Ascending aorta (tissue), 2 donors: ENCODE measurements at regions of chr15 and their contacts with region 1.

Region 1: GRCh38 chr15:71278989-71279756 is 163.9 kb downstream of the THSD4 start:
- DNase-seq: peak; percentile 31 to 90
- H3K4me3 ChIP-seq: peak overlapping the region in 1 of 2 donors; percentile 18
- H3K27ac ChIP-seq: peak overlapping the region; percentile 80 to 93
- H3K4me1 ChIP-seq: peaks cover 0 to 49% of the 10 kb centered on the region in 2 donors
- H3K27me3 ChIP-seq: no peaks in the 10 kb centered on the region
- CTCF ChIP-seq: no peak

Region 2: GRCh38 chr15:71079208-71080021 is 199.8 kb before region 1 on chr15:
- intact Hi-C with region 1: loop called (anchors 5 kb)
- DNase-seq: peak in 1 of 2 donors; percentile 90
- H3K4me3 ChIP-seq: no peak overlapping the region
- H3K27ac ChIP-seq: peak overlapping the region; percentile 93 to 95
- H3K4me1 ChIP-seq: peaks cover 5 to 44% of the 10 kb centered on the region in 2 donors
- H3K27me3 ChIP-seq: no peaks in the 10 kb centered on the region
- CTCF ChIP-seq: no peak

Region 3: DNA sequence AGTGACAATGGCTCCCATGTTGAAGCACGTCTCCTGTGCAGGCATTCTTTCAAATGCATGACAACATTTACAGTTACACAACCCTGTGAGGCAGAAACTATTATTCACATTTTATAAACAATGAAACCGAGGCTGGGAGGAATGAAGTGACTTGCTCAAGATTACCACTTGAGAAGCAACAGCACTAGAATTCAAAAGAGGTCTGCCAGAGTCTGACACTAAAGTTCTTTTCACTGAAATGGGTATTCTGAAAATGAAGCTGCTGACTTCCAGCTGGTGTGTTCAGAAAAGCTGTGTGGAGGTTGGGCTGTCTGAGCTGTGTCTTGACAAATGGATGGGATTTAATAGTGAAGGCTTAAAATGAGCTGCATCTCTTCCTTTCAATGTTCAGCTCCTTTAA is 59.5 kb before region 1 on chr15:
- intact Hi-C with region 1: loop called (anchors 10 kb)
- DNase-seq: no peak
- H3K4me3 ChIP-seq: no peak overlapping the region
- H3K27ac ChIP-seq: peak overlapping the region; percentile 40 to 66
- H3K4me1 ChIP-seq: peaks cover 0 to 19% of the 10 kb centered on the region in 2 donors
- H3K27me3 ChIP-seq: no peaks in the 10 kb centered on the region
- CTCF ChIP-seq: no peak

Region 4: GRCh38 chr15:71329497-71330260 is 50.5 kb after region 1 on chr15:
- intact Hi-C with region 1: loop called (anchors 1 kb)
- DNase-seq: peak; percentile 49 to 88
- H3K4me3 ChIP-seq: no peak overlapping the region
- H3K27ac ChIP-seq: peak overlapping the region; percentile 91 to 92
- H3K4me1 ChIP-seq: peaks cover 5 to 64% of the 10 kb centered on the region in 2 donors
- H3K27me3 ChIP-seq: no peaks in the 10 kb centered on the region
- CTCF ChIP-seq: no peak

Region 5: DNA sequence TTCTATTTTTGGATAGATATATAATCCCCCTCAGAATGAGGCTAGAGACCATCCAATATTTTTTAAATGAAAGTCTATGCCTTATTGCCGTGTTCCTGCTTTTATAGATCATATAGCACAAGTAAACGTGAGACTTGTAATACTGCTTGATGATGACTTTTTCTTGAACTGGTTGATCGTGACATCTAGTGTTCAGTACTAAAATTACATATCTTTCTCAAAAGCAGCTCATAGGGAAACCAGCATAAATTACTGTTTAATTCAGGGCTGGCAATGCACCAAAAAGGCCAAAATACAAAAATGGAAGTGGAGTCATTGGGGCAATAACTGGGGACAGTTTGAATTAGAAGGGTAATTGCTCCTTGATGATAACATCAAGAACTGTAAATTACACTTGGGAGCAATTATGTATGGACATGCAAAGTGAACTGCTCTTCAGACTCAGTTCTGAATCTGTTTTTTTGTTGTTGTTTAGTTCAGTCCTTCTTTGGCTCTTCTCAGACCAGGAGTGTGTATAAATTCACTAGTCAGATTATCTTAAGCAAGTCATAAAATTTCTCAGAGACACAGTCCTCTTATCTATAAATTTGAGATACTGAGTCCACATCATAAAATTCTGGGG is 161.4 kb after region 1 on chr15:
- intact Hi-C with region 1: loop called (anchors 5 kb)
- DNase-seq: no peak
- H3K4me3 ChIP-seq: no peak overlapping the region
- H3K27ac ChIP-seq: no peak overlapping the region
- H3K4me1 ChIP-seq: peaks cover 1 to 19% of the 10 kb centered on the region in 2 donors
- H3K27me3 ChIP-seq: no peaks in the 10 kb centered on the region
- CTCF ChIP-seq: peak; percentile 60 to 75 (median 62)